ENCODE measurements at regions of chr10 and their contacts with region 1.

Region 1: GRCh38 chr10:133124357-133125211 is 35.4 kb upstream of the KNDC1 start:
- DNase-seq: no peak
- H3K4me3 ChIP-seq: no peak overlapping the region
- H3K27ac ChIP-seq: no peak overlapping the region
- H3K4me1 ChIP-seq: no peaks in the 10 kb centered on the region
- H3K27me3 ChIP-seq: no peaks in the 10 kb centered on the region
- CTCF ChIP-seq: peak; percentile 62

Region 2: GRCh38 chr10:132836832-132837540 is 287.6 kb before region 1 on chr10:
- intact Hi-C with region 1: loop called (anchors 5 kb)
- DNase-seq: no peak
- H3K4me3 ChIP-seq: no peak overlapping the region
- H3K27ac ChIP-seq: no peak overlapping the region
- H3K4me1 ChIP-seq: no peaks in the 10 kb centered on the region
- H3K27me3 ChIP-seq: peaks cover 10% of the 10 kb centered on the region
- CTCF ChIP-seq: peak; percentile 96

Region 3: DNA sequence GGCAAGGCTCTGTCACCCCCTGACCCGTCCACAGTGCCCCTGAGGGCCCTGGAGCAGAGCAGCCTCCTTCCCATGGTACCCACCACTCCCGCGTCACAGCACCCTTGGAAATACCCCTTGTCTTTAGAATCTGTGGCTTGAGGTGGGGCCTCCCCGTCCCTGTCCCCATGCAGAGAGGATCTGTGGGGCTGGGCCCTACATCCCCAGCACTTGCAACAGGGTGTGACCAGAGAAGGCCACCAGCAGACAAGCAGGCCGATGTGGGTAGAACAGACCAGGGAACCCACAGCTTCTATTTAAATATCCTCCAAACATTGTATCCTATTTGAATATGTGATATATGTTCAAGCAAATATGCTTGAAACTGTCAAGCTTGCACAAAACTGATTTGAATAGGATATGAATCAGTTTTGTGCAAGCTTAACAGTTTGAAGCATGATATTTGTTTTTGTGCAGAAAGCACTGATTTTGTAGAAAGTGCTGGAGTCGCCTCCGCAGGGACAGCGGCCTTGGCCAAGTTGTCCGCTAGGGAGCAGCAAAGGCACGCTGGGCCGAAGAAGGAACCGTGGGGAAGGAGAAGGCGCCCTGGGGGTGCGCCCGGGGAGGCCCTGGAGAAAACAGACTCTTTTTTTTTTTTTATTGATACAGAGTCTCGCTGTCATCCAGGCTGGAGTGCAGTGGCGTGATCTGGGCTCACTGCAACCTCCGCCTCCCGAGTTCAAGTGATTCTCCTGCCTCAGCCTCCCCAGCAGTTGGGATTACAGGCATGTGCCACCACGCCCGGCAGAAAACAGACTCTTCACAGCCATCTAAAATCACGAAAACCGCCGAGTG is 184.4 kb before region 1 on chr10:
- intact Hi-C with region 1: loop called (anchors 2 kb)
- DNase-seq: peak; percentile 37
- H3K4me3 ChIP-seq: no peak overlapping the region
- H3K27ac ChIP-seq: no peak overlapping the region
- H3K4me1 ChIP-seq: no peaks in the 10 kb centered on the region
- H3K27me3 ChIP-seq: peaks cover 24% of the 10 kb centered on the region
- CTCF ChIP-seq: peak; percentile 80

Region 4: GRCh38 chr10:133079836-133080682 is 44.5 kb before region 1 on chr10:
- intact Hi-C with region 1: no loop called
- DNase-seq: no peak
- H3K4me3 ChIP-seq: no peak overlapping the region
- H3K27ac ChIP-seq: no peak overlapping the region
- H3K4me1 ChIP-seq: no peaks in the 10 kb centered on the region
- H3K27me3 ChIP-seq: no peaks in the 10 kb centered on the region
- CTCF ChIP-seq: no peak

Measured in colonic mucosa (tissue), 4 donors.